Naive thymus-derived CD4-positive, alpha-beta T cell (primary cell): ENCODE measurements at regions of chr15 and their contacts with region 1.

Region 1: GRCh38 chr15:41116116-41116871 is at the start of gene INO80:
- DNase-seq: peak; percentile 92 to 98 (median 96)
- ATAC-seq: peak; percentile 90
- H3K4me3 ChIP-seq: peak within 1 kb of the TSS; percentile 85
- H3K4me3 Mint-ChIP-seq: peak within 1 kb of the TSS; percentile 90 to 99 (median 96)
- H3K27ac ChIP-seq: peak within 1 kb of the TSS; percentile 80
- H3K27ac Mint-ChIP-seq: peak within 1 kb of the TSS; percentile 98 to 100 (median 99)
- H3K4me1 ChIP-seq: peaks cover 14 to 16% of the 10 kb centered on the region in 2 donors
- H3K4me1 Mint-ChIP-seq: peaks cover 5 to 40% (median 30%) of the 10 kb centered on the region in 7 donors
- H3K27me3 ChIP-seq: no peaks in the 10 kb centered on the region
- H3K27me3 Mint-ChIP-seq: peaks cover 0 to 4% (median 0%) of the 10 kb centered on the region in 5 donors
- total RNA-seq, gene INO80: 30.1 to 36.5 (median 32.3) TPM

Region 2: DNA sequence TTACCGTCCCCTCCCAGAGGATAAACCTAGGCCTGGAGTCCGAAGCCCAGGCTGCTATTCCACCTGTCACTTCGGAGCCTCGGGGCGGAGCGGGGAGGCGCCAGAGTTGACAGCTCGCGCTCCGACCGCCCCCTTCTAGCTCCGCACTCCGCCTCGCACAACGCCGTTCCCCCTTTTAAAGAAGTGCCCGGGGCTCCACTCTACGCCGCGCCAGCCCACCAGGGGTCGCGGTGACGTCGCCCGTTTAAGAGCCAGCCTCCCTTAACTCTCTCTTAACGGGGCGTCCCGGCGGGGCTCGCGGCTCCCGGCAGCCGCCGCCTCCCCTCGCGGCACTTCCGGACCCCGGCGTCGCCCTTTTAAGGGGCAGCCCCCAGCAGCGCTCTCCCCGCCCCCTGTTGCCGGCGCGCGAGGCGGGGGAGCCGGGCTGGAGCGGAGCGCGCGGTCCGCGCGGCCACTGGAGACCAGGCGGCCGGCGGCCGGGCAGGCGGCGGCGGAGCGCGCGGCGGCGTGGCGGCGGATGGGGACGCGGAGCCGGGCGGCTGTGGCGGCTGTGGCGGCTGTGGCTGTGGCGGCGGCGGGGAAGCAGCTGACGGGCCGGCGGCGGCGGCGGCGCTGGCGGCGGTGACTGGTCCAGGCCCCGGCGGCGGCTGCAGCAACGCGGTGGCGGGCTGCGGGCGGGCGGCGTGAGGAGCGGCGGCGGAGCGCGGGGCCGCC is 792.9 kb before region 1 on chr15 and contains the start of gene INAFM2:
- CTCF ChIA-PET with region 1: no interaction called
- POLR2A ChIA-PET with region 1: no interaction called
- intact Hi-C with region 1: loop called in 1 of 2 experiments (anchors 5 kb)
- DNase-seq: peak; percentile 77 to 91 (median 89)
- ATAC-seq: peak; percentile 95
- H3K4me3 ChIP-seq: peak within 1 kb of the TSS; percentile 34
- H3K4me3 Mint-ChIP-seq: peak within 1 kb of the TSS; percentile 69 to 89 (median 84)
- H3K27ac ChIP-seq: peak within 1 kb of the TSS; percentile 66
- H3K27ac Mint-ChIP-seq: peak within 1 kb of the TSS in 8 of 9 donors; percentile 56 to 86 (median 80)
- H3K4me1 ChIP-seq: peaks cover 15% of the 10 kb centered on the region in 2 donors
- H3K4me1 Mint-ChIP-seq: peaks cover 19 to 51% (median 43%) of the 10 kb centered on the region in 7 donors
- H3K27me3 ChIP-seq: no peaks in the 10 kb centered on the region
- H3K27me3 Mint-ChIP-seq: peaks cover 0 to 23% (median 0%) of the 10 kb centered on the region in 5 donors
- total RNA-seq, gene INAFM2: 7.1 to 21.2 (median 12.7) TPM

Region 3: GRCh38 chr15:40469776-40470399 is 646.4 kb before region 1 on chr15:
- CTCF ChIA-PET with region 1: no interaction called
- POLR2A ChIA-PET with region 1: no interaction called
- intact Hi-C with region 1: no loop called
- DNase-seq: no peak
- ATAC-seq: no peak
- H3K4me3 ChIP-seq: peak overlapping the region; percentile 36
- H3K4me3 Mint-ChIP-seq: peak overlapping the region; percentile 45 to 82 (median 60)
- H3K27ac ChIP-seq: peak overlapping the region; percentile 81
- H3K27ac Mint-ChIP-seq: peak overlapping the region; percentile 62 to 82 (median 75)
- H3K4me1 ChIP-seq: peaks cover 8 to 16% of the 10 kb centered on the region in 2 donors
- H3K4me1 Mint-ChIP-seq: peaks cover 15 to 51% (median 38%) of the 10 kb centered on the region in 7 donors
- H3K27me3 ChIP-seq: no peaks in the 10 kb centered on the region
- H3K27me3 Mint-ChIP-seq: peaks cover 0 to 3% (median 0%) of the 10 kb centered on the region in 5 donors

Region 4: DNA sequence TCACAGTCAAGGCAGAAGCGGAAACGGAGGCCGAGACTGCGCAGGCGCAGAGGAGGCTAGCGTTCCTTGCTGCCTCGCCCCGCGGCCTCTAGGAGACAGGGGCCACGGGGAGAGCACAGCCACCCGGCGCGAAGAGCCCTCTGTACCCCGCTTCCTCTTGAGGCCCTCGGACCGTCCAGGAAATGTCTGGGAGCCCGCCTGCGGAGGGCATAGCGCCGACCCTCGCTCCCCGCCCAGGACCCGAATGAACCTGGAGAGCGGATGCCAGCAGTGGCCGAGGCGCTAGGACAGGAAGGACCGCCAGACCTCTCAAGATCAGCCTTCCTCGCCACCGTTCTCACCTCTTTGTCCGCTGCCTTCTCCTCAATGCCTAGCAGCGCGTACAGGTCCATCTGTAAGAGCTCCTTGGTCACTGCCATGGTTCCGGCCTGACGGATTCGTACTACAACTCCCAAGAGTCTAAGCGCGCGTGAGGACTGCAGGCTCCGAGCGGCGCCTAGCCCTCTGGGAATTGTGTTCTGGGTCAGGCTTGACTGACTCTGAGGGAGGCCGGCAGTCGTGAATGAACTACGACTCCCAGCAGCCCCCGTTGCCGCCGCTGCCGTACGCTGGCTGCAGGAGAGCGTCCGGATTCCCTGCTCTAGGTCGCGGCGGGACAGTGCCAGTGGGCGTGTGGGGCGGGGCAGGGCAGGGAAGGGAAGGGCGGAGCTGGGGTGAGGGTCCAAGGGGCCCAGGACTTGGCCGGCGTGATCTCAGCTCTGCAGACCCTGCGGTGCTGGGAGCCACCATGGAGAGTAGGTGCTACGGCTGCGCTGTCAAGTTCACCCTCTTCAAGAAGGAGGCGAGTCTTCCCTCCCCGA is 309.0 kb before region 1 on chr15 and contains the starts of genes DNAJC17 and ZFYVE19:
- CTCF ChIA-PET with region 1: no interaction called
- POLR2A ChIA-PET with region 1: no interaction called
- intact Hi-C with region 1: loop called (anchors 1 kb)
- DNase-seq: peak; percentile 86 to 96 (median 91)
- ATAC-seq: peak; percentile 99
- H3K4me3 ChIP-seq: peak within 1 kb of the TSS; percentile 99
- H3K4me3 Mint-ChIP-seq: peak within 1 kb of the TSS; percentile 92 to 98 (median 96)
- H3K27ac ChIP-seq: peak within 1 kb of the TSS; percentile 95
- H3K27ac Mint-ChIP-seq: peak within 1 kb of the TSS; percentile 84 to 98 (median 96)
- H3K4me1 ChIP-seq: peaks cover 14 to 16% of the 10 kb centered on the region in 2 donors
- H3K4me1 Mint-ChIP-seq: peaks cover 17 to 43% (median 25%) of the 10 kb centered on the region in 7 donors
- H3K27me3 ChIP-seq: no peaks in the 10 kb centered on the region
- H3K27me3 Mint-ChIP-seq: no peaks in the 10 kb centered on the region
- total RNA-seq, gene DNAJC17: 28.8 to 50.9 (median 36.7) TPM
- total RNA-seq, gene ZFYVE19: 17.9 to 31.9 (median 30.5) TPM

Region 5: GRCh38 chr15:41150279-41150678 is 34.0 kb after region 1 on chr15:
- CTCF ChIA-PET with region 1: interaction called, 3 read pairs
- POLR2A ChIA-PET with region 1: no interaction called
- intact Hi-C with region 1: loop called in 1 of 2 experiments (anchors 1 kb)
- DNase-seq: no peak
- ATAC-seq: no peak
- H3K4me3 ChIP-seq: no peak overlapping the region
- H3K4me3 Mint-ChIP-seq: peak overlapping the region in 1 of 10 donors; percentile 68
- H3K27ac ChIP-seq: no peak overlapping the region
- H3K27ac Mint-ChIP-seq: peak overlapping the region in 1 of 9 donors; percentile 72
- H3K4me1 ChIP-seq: no peaks in the 10 kb centered on the region
- H3K4me1 Mint-ChIP-seq: peaks cover 0 to 28% (median 0%) of the 10 kb centered on the region in 7 donors
- H3K27me3 ChIP-seq: no peaks in the 10 kb centered on the region
- H3K27me3 Mint-ChIP-seq: peaks cover 0 to 11% (median 0%) of the 10 kb centered on the region in 5 donors

Region 6: DNA sequence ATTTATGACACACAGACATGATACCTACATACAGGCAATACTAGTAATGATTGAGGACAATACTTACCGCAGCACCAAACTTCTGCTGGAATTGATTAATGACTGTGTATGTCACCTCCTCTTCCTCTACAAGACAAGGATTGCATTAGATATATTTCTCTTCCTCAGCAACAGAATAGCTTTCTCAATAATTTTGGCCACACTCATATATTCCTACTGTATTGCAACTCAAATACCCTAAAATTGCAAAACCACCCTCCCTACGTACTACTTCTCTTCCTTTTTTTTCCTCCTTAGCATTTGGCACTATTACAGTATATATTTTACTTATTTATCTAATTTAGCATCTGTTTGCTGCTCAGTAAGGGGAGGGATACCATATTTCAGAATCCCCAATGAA is 99.4 kb after region 1 on chr15:
- CTCF ChIA-PET with region 1: no interaction called
- POLR2A ChIA-PET with region 1: no interaction called
- intact Hi-C with region 1: no loop called
- DNase-seq: no peak
- ATAC-seq: peak; percentile 55
- H3K4me3 ChIP-seq: no peak overlapping the region
- H3K4me3 Mint-ChIP-seq: no peak overlapping the region
- H3K27ac ChIP-seq: no peak overlapping the region
- H3K27ac Mint-ChIP-seq: no peak overlapping the region
- H3K4me1 ChIP-seq: no peaks in the 10 kb centered on the region
- H3K4me1 Mint-ChIP-seq: no peaks in the 10 kb centered on the region
- H3K27me3 ChIP-seq: no peaks in the 10 kb centered on the region
- H3K27me3 Mint-ChIP-seq: peaks cover 0 to 53% (median 10%) of the 10 kb centered on the region in 5 donors

Region 7: GRCh38 chr15:41331833-41332787 is 215.8 kb after region 1 on chr15 and contains the start of gene OIP5:
- CTCF ChIA-PET with region 1: interaction called, 3 read pairs
- POLR2A ChIA-PET with region 1: no interaction called
- intact Hi-C with region 1: loop called (anchors 1 kb)
- DNase-seq: peak; percentile 83 to 99 (median 97)
- ATAC-seq: peak; percentile 98
- H3K4me3 ChIP-seq: peak within 1 kb of the TSS; percentile 95
- H3K4me3 Mint-ChIP-seq: peak within 1 kb of the TSS; percentile 87 to 100 (median 97)
- H3K27ac ChIP-seq: peak within 1 kb of the TSS; percentile 52
- H3K27ac Mint-ChIP-seq: peak within 1 kb of the TSS; percentile 77 to 97 (median 91)
- H3K4me1 ChIP-seq: peaks cover 9 to 13% of the 10 kb centered on the region in 2 donors
- H3K4me1 Mint-ChIP-seq: peaks cover 12 to 32% (median 29%) of the 10 kb centered on the region in 7 donors
- H3K27me3 ChIP-seq: no peaks in the 10 kb centered on the region
- H3K27me3 Mint-ChIP-seq: no peaks in the 10 kb centered on the region
- total RNA-seq, gene OIP5: 0.32 to 15.2 (median 0.54) TPM in 4 of 5 experiments, not detected in the other

Region 8: GRCh38 chr15:41972253-41973242 is 856.3 kb after region 1 on chr15 and contains the start of gene EHD4:
- CTCF ChIA-PET with region 1: no interaction called
- POLR2A ChIA-PET with region 1: no interaction called
- intact Hi-C with region 1: loop called in 1 of 2 experiments (anchors 5 kb)
- DNase-seq: peak; percentile 85 to 96 (median 94)
- ATAC-seq: peak; percentile 91
- H3K4me3 ChIP-seq: peak within 1 kb of the TSS; percentile 87
- H3K4me3 Mint-ChIP-seq: peak within 1 kb of the TSS; percentile 85 to 97 (median 94)
- H3K27ac ChIP-seq: peak within 1 kb of the TSS; percentile 83
- H3K27ac Mint-ChIP-seq: peak within 1 kb of the TSS; percentile 90 to 97 (median 95)
- H3K4me1 ChIP-seq: peaks cover 19 to 23% of the 10 kb centered on the region in 2 donors
- H3K4me1 Mint-ChIP-seq: peaks cover 31 to 55% (median 45%) of the 10 kb centered on the region in 7 donors
- H3K27me3 ChIP-seq: no peaks in the 10 kb centered on the region
- H3K27me3 Mint-ChIP-seq: peaks cover 0 to 17% (median 7%) of the 10 kb centered on the region in 5 donors
- total RNA-seq, gene EHD4: 10.4 to 48.3 (median 23.7) TPM